ENCODE measurements at regions of chr11 and their contacts with region 1.

Region 1: GRCh38 chr11:59053387-59053786 is 32.7 kb upstream of the GLYATL1B start:
- DNase-seq: peak; percentile 51 to 57
- ATAC-seq: no peak
- H3K4me3 ChIP-seq: no peak overlapping the region
- H3K27ac ChIP-seq: no peak overlapping the region
- H3K4me1 ChIP-seq: peaks cover 0 to 3% (median 0%) of the 10 kb centered on the region in 9 donors
- H3K27me3 ChIP-seq: peaks cover 0 to 38% (median 19%) of the 10 kb centered on the region in 7 donors
- CTCF ChIP-seq: peak; percentile 25 to 85 (median 69)

Region 2: DNA sequence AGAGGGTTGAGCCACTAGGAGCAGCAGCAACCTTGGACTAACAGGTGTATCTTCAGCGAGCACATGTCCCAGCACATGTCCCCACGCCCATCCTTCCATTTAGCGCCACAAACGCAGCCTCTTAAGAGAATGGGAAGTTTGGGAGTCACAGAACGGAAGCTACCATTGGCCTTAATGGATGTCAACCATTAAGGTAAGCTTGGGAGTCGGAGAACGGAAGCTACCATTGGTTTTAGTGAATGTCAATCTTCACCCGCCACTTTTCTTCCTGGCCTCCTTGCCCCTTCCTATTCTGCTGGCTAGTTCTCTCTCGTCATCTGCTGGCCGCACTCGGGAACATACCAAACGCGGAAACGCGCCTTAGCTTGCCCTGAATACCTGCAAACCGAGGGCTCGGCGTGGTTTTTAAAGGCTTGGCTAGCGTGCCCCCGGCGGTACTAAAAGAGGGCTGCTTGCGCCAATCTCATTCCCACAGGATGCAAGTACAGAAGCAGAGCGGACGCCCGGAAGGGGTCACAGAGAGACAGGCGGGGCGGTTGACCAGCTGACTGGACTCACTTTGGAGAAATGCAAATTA is 89.8 kb before region 1 on chr11:
- intact Hi-C with region 1: loop called in 1 of 10 experiments (anchors 10 kb)
- DNase-seq: no peak
- ATAC-seq: no peak
- H3K4me3 ChIP-seq: no peak overlapping the region
- H3K27ac ChIP-seq: no peak overlapping the region
- H3K4me1 ChIP-seq: no peaks in the 10 kb centered on the region
- H3K27me3 ChIP-seq: peaks cover 0 to 74% (median 35%) of the 10 kb centered on the region in 7 donors
- CTCF ChIP-seq: no peak

Region 3: GRCh38 chr11:59106363-59107336 is 53.3 kb after region 1 on chr11 and contains the start of gene FAM111B:
- intact Hi-C with region 1: no loop called
- DNase-seq: peak; percentile 74 to 90
- ATAC-seq: peak; percentile 92 to 98 (median 96)
- H3K4me3 ChIP-seq: peak within 1 kb of the TSS; percentile 1 to 74 (median 58)
- H3K27ac ChIP-seq: peak within 1 kb of the TSS in 2 of 10 donors; percentile 31 to 45
- H3K4me1 ChIP-seq: peaks cover 0 to 25% (median 7%) of the 10 kb centered on the region in 9 donors
- H3K27me3 ChIP-seq: peaks cover 0 to 39% (median 18%) of the 10 kb centered on the region in 7 donors
- CTCF ChIP-seq: peak in 3 of 9 donors; percentile 21 to 31 (median 24)
- total RNA-seq, gene FAM111B: 0.11 to 3.1 (median 0.30) TPM in 8 of 10 donors, not detected in the others

Region 4: GRCh38 chr11:59135648-59136461 is 82.5 kb after region 1 on chr11:
- intact Hi-C with region 1: loop called in 3 of 10 experiments (anchors 2 to 10 kb)
- DNase-seq: peak; percentile 74 to 81
- ATAC-seq: peak; percentile 83 to 97 (median 94)
- H3K4me3 ChIP-seq: peak overlapping the region in 2 of 10 donors; percentile 12 to 13
- H3K27ac ChIP-seq: no peak overlapping the region
- H3K4me1 ChIP-seq: peaks cover 0 to 8% (median 0%) of the 10 kb centered on the region in 9 donors
- H3K27me3 ChIP-seq: no peaks in the 10 kb centered on the region
- CTCF ChIP-seq: peak; percentile 92 to 99 (median 97)

Region 5: GRCh38 chr11:59158206-59159068 is 105.0 kb after region 1 on chr11:
- intact Hi-C with region 1: loop called in 1 of 10 experiments (anchors 10 kb)
- DNase-seq: peak in 1 of 2 donors; percentile 54
- ATAC-seq: peak; percentile 55 to 92 (median 88)
- H3K4me3 ChIP-seq: no peak overlapping the region
- H3K27ac ChIP-seq: no peak overlapping the region
- H3K4me1 ChIP-seq: peaks cover 0 to 10% (median 0%) of the 10 kb centered on the region in 9 donors
- H3K27me3 ChIP-seq: peaks cover 0 to 5% (median 0%) of the 10 kb centered on the region in 7 donors
- CTCF ChIP-seq: peak; percentile 60 to 88 (median 81)

Region 6: GRCh38 chr11:59207988-59208451 is 154.6 kb after region 1 on chr11:
- intact Hi-C with region 1: no loop called
- DNase-seq: peak in 1 of 2 donors; percentile 37
- ATAC-seq: peak in 6 of 8 donors; percentile 32 to 58 (median 50)
- H3K4me3 ChIP-seq: peak overlapping the region in 5 of 10 donors; percentile 22 to 58 (median 37)
- H3K27ac ChIP-seq: peak overlapping the region in 5 of 10 donors; percentile 16 to 69 (median 53)
- H3K4me1 ChIP-seq: peaks cover 0 to 32% (median 9%) of the 10 kb centered on the region in 9 donors
- H3K27me3 ChIP-seq: peaks cover 0 to 3% (median 0%) of the 10 kb centered on the region in 7 donors
- CTCF ChIP-seq: peak; percentile 53 to 83 (median 76)

Measured in heart right ventricle (tissue), 16 donors.